Activated CD4-positive, alpha-beta T cell treated with anti-CD3 and anti-CD28 coated beads, Interleukin-2, amount 10 ng/mL, durations not matched to agents 24 days and 14 days (primary cell): ENCODE measurements at regions of chr17 and their contacts with region 1.

Region 1: DNA sequence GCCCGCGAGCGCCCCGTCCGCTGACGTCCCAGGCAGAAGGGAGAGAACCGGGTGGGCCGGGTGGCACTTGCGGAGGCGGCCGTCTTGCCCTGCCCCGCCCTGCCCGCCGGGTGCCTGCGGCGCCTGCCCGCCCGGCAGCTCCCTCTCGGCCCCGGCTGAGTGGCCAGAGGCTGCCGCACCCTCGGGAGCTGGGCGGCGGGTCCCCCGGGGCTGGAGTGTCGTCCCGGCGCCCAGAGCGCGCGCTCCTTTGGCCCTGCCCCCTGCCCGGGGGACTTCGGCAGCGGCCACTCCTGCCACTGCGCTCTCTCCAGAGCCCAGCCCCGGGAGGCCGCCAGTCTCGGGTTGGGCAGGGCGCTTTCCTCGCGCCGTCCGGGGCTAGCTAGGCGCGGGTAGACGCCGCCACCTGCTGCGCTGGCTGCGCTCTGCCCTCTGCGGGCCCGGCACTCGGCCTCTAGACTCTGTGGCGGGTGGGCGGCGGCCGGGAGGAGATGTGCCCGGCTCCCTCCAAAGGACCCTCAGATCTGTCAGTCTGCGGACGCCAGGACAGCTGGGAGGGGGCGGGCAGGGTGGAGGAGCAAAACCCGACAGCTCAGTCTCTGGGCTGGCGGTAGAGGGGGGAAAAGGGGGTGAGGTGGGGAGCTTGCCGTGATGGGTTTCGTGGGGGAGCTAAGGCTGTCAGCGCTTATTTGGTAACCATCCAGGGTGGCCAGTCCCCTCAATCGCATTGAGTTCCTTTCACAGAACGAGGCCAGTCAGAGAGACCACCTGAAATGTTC is at the start of gene ST6GALNAC2:
- DNase-seq: peak; percentile 78
- H3K4me3 Mint-ChIP-seq: peak within 1 kb of the TSS; percentile 74
- H3K27ac Mint-ChIP-seq: no peak within 1 kb of the TSS
- H3K4me1 Mint-ChIP-seq: peaks cover 1% of the 10 kb centered on the region
- H3K27me3 Mint-ChIP-seq: peaks cover 70% of the 10 kb centered on the region
- total RNA-seq, gene ST6GALNAC2: not detected in 2 replicates

Region 2: DNA sequence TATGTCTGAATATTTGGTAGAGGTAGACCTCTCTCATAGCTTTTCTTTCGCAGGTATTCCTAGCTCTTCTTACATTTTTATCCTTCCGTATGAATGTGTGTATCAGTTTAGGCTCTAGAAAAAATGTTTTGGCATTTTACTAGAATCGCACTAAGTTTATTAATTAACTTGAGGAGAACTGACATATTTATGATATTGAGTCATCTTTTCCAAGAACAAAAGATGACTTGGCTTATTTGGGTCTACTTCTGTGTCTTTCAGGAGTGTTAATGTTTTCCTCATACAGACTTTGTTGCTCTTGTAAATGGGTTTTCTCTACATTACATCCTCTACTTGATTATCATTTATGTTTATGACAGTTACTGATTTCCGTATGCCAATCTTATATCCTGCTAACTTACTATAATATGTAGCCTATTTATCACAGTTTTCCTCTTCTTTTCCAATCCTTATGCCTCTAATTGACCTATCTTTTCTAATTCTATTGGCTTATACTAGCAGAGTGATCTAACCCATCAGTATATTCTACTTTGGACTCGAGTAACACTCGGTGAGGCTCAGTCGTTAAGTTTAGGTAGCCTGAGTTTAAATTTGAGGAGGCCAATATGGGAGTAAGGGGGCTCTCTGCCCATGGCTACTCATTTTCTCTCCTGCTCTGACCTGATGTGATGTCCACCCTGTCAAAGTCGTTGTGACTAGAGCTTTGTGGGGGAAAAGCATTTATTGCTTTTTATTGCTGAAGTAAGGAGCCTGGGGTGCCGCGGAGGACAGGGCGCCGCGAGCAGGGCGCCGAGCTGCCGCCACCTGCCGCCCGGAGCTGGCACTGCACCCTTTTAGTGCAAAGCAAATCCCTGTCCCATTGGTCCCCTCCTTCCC is 37.5 kb after region 1 on chr17:
- intact Hi-C with region 1: loop called (anchors 5 kb)
- DNase-seq: peak; percentile 92
- H3K4me3 Mint-ChIP-seq: no peak overlapping the region
- H3K27ac Mint-ChIP-seq: no peak overlapping the region
- H3K4me1 Mint-ChIP-seq: peaks cover 6% of the 10 kb centered on the region
- H3K27me3 Mint-ChIP-seq: peaks cover 22% of the 10 kb centered on the region